ENCODE measurements at regions of chr10 and their contacts with region 1.

Region 1: GRCh38 chr10:15824498-15824897 is 35.8 kb downstream of the MINDY3 start:
- DNase-seq: no peak
- H3K4me3 ChIP-seq: no peak overlapping the region
- H3K27ac ChIP-seq: no peak overlapping the region
- H3K27me3 ChIP-seq: no peaks in the 10 kb centered on the region
- CTCF ChIP-seq: peak in 55 of 56 donors; percentile 32 to 75 (median 60)

Region 2: GRCh38 chr10:15427843-15428414 is 396.6 kb before region 1 on chr10:
- intact Hi-C with region 1: loop called (anchors 5 kb)
- DNase-seq: no peak
- H3K4me3 ChIP-seq: no peak overlapping the region
- H3K27ac ChIP-seq: no peak overlapping the region
- H3K27me3 ChIP-seq: peaks cover 0 to 6% (median 0%) of the 10 kb centered on the region in 45 donors
- CTCF ChIP-seq: peak in 55 of 56 donors; percentile 36 to 92 (median 69)

Measured in dorsolateral prefrontal cortex (tissue), 120 donors.